ENCODE measurements at regions of chr13 and their contacts with region 1.

Region 1: DNA sequence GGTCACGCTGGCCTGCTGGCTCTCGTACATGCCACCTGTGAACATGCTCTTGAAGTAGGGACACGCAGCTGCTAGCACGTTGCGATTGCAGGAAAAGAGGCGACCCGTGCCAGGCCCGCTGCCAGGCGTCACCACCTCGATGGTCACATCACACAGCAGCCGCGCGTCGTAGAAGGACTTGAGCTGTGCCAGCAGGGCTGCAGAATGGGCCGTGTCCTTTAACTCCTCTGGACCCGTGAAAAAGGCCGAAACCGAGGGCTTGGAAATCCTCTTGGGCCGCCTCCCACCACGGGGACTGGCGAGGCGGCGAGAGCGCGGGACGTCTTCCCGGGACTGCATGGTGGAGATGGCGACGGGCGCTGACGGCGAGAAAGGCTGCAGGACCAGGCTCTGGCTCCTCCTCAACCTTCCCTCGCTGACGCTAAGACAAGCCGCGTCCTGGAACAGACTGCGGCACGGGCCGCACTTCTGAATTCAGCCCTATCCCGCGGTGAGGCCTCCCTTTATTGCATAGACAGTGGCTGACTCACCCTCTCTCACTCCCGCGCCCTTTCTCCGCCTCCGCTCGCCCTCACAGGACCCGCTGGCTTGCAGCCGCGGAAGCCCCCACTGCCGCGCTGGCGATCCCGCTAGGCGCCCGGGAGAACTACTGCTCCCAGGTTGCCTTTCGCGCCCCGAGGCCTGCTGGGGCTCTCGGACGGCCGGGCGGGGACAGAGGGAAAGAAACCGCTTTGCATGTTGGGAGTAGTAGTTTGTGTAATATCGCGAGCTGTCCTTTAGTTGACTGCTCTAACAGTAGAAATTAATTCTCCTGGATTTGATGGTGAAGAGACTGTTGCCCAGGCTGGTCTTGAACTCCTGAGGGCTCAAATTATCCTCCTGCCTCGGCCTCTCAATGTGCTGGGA is at the start of gene KBTBD7:
- DNase-seq: peak; percentile 88
- H3K4me3 Mint-ChIP-seq: peak within 1 kb of the TSS; percentile 93
- H3K27ac Mint-ChIP-seq: peak within 1 kb of the TSS; percentile 97
- H3K4me1 Mint-ChIP-seq: peaks cover 58% of the 10 kb centered on the region
- H3K27me3 Mint-ChIP-seq: no peaks in the 10 kb centered on the region
- total RNA-seq, gene KBTBD7: 6.2 and 6.3 TPM in 2 replicates

Region 2: GRCh38 chr13:40922437-40923040 is 271.6 kb before region 1 on chr13:
- intact Hi-C with region 1: loop called (anchors 2 kb)
- DNase-seq: no peak
- H3K4me3 Mint-ChIP-seq: peak overlapping the region; percentile 77
- H3K27ac Mint-ChIP-seq: peak overlapping the region; percentile 70
- H3K4me1 Mint-ChIP-seq: peaks cover 10% of the 10 kb centered on the region
- H3K27me3 Mint-ChIP-seq: peaks cover 1% of the 10 kb centered on the region

Region 3: DNA sequence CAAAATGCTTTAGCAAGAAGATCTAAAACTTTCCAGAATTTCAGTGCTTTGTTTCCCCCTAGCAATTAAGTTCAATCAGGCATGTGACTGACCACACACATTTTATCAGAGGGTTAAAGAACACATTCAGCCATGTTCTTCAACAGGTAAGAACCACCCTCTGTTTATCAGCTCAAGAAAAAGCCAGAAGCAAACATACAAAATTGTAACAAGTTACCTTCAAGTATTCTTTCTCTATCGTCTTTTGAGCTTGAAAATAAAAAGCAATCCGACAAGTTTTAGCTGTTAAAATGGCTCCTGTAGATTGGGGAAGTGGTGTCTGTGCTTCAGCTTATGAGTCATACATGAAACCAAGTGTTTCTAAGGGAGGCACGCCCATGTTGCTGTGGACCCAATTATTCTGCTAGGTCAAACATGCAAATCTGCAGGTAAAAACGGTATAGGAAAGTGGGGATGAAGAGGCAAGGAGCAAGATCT is 175.1 kb before region 1 on chr13 and contains the start of gene ELF1:
- intact Hi-C with region 1: loop called (anchors 1 kb)
- DNase-seq: peak; percentile 49
- H3K4me3 Mint-ChIP-seq: peak within 1 kb of the TSS; percentile 91
- H3K27ac Mint-ChIP-seq: peak within 1 kb of the TSS; percentile 97
- H3K4me1 Mint-ChIP-seq: peaks cover 53% of the 10 kb centered on the region
- H3K27me3 Mint-ChIP-seq: no peaks in the 10 kb centered on the region
- total RNA-seq, gene ELF1: 75.3 and 76.8 TPM in 2 replicates

Region 4: GRCh38 chr13:41132512-41133152 is 61.5 kb before region 1 on chr13 and contains the start of gene KBTBD6:
- intact Hi-C with region 1: loop called (anchors 1 kb)
- DNase-seq: peak; percentile 92
- H3K4me3 Mint-ChIP-seq: peak within 1 kb of the TSS; percentile 92
- H3K27ac Mint-ChIP-seq: peak within 1 kb of the TSS; percentile 93
- H3K4me1 Mint-ChIP-seq: peaks cover 45% of the 10 kb centered on the region
- H3K27me3 Mint-ChIP-seq: peaks cover 3% of the 10 kb centered on the region
- total RNA-seq, gene KBTBD6: 6.6 and 6.8 TPM in 2 replicates

Region 5: GRCh38 chr13:41222259-41222852 is 28.2 kb after region 1 on chr13:
- intact Hi-C with region 1: loop called (anchors 1 kb)
- DNase-seq: peak; percentile 40
- H3K4me3 Mint-ChIP-seq: no peak overlapping the region
- H3K27ac Mint-ChIP-seq: no peak overlapping the region
- H3K4me1 Mint-ChIP-seq: no peaks in the 10 kb centered on the region
- H3K27me3 Mint-ChIP-seq: no peaks in the 10 kb centered on the region

Region 6: GRCh38 chr13:41310963-41311606 is 116.9 kb after region 1 on chr13 and contains the start of gene NAA16:
- intact Hi-C with region 1: loop called (anchors 1 kb)
- DNase-seq: peak; percentile 92
- H3K4me3 Mint-ChIP-seq: peak within 1 kb of the TSS; percentile 94
- H3K27ac Mint-ChIP-seq: peak within 1 kb of the TSS; percentile 83
- H3K4me1 Mint-ChIP-seq: peaks cover 38% of the 10 kb centered on the region
- H3K27me3 Mint-ChIP-seq: peaks cover 2% of the 10 kb centered on the region
- total RNA-seq, gene NAA16: 31.9 and 33.4 TPM in 2 replicates

Measured in activated T-helper 1 cell treated with anti-CD3 and anti-CD28 coated beads, Interleukin-12 subunit alpha, Interleukin-12 subunit beta, Interleukin-2, Interleukin-4 antibody, amounts not matched to agents 30 ng/mL and 10 ng/mL and 1 ng/mL, durations not matched to agents 14 hours and 24 hours and 36 hours (primary cell).